CD4-positive, alpha-beta T cell (primary cell): ENCODE measurements at regions of chr10 and their contacts with region 1.

Region 1: DNA sequence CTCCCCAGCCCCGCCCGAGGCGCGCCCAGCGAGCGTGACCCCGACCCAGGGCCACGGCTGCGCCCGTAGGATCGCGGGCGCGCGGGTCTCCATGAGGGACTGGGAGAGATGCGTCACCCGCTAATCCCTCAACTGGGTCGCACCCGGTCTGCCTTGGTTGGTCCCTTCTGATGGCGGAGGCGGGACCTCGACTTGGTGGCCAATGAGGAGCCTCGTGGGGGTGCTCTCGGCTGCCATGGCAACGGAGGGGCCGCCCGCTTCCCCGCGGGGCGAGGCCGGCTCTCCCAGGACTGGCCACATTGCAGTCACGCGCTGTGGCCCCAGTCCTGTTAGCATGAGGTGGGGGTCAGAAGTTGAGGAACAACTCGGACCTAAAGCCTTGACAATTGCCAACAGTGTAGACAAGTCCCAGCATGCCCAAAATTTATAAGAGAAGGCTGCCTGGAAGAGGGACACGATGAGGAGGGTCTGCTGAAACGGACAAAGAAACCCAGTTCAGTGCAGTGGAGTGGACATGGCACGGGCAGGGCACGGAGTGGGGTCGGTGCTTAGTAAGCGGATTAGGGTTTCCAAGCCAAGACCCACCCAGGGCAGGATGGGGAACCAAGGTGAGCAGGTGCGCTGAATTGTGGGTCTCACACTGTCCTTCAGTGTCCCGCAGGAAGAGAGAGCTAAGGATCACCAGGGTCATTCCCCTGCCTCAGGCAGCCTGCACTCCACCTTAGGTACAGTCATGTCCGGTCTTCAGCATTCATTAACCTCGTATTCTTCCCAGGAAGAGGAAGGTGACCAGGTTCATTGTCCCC is 24.4 kb downstream of the DDIT4 start:
- DNase-seq: peak; percentile 68 to 97 (median 83)
- ATAC-seq: peak; percentile 57
- H3K4me3 ChIP-seq: peak overlapping the region; percentile 75
- H3K4me3 Mint-ChIP-seq: peak overlapping the region; percentile 82
- H3K27ac ChIP-seq: peak overlapping the region; percentile 89 to 98
- H3K27ac Mint-ChIP-seq: peak overlapping the region; percentile 96
- H3K4me1 ChIP-seq: peaks cover 56% of the 10 kb centered on the region
- H3K4me1 Mint-ChIP-seq: peaks cover 63% of the 10 kb centered on the region
- H3K27me3 ChIP-seq: no peaks in the 10 kb centered on the region
- H3K27me3 Mint-ChIP-seq: no peaks in the 10 kb centered on the region
- CTCF ChIP-seq: no peak

Region 2: GRCh38 chr10:72248468-72249151 is 49.6 kb before region 1 on chr10:
- CTCF ChIA-PET with region 1: no interaction called
- POLR2A ChIA-PET with region 1: interaction called, 31 read pairs
- intact Hi-C with region 1: loop called in 1 of 2 experiments (anchors 1 kb)
- DNase-seq: peak; percentile 54 to 96 (median 64)
- ATAC-seq: peak; percentile 87
- H3K4me3 ChIP-seq: peak overlapping the region; percentile 31
- H3K4me3 Mint-ChIP-seq: peak overlapping the region; percentile 85
- H3K27ac ChIP-seq: peak overlapping the region; percentile 20 to 62
- H3K27ac Mint-ChIP-seq: peak overlapping the region; percentile 96
- H3K4me1 ChIP-seq: peaks cover 99% of the 10 kb centered on the region
- H3K4me1 Mint-ChIP-seq: peaks cover 86% of the 10 kb centered on the region
- H3K27me3 ChIP-seq: no peaks in the 10 kb centered on the region
- H3K27me3 Mint-ChIP-seq: no peaks in the 10 kb centered on the region
- CTCF ChIP-seq: no peak

Region 3: GRCh38 chr10:72254813-72255568 is 43.2 kb before region 1 on chr10:
- CTCF ChIA-PET with region 1: no interaction called
- POLR2A ChIA-PET with region 1: interaction called, 10 read pairs
- intact Hi-C with region 1: loop called in 1 of 2 experiments (anchors 5 kb)
- DNase-seq: peak in 7 of 14 experiments; percentile 32 to 71 (median 58)
- ATAC-seq: peak; percentile 73
- H3K4me3 ChIP-seq: peak overlapping the region; percentile 13
- H3K4me3 Mint-ChIP-seq: peak overlapping the region; percentile 79
- H3K27ac ChIP-seq: peak overlapping the region in 1 of 2 donors; percentile 35
- H3K27ac Mint-ChIP-seq: peak overlapping the region; percentile 96
- H3K4me1 ChIP-seq: peaks cover 90% of the 10 kb centered on the region
- H3K4me1 Mint-ChIP-seq: peaks cover 78% of the 10 kb centered on the region
- H3K27me3 ChIP-seq: no peaks in the 10 kb centered on the region
- H3K27me3 Mint-ChIP-seq: no peaks in the 10 kb centered on the region
- CTCF ChIP-seq: no peak

Region 4: GRCh38 chr10:72260588-72261322 is 37.4 kb before region 1 on chr10:
- CTCF ChIA-PET with region 1: no interaction called
- POLR2A ChIA-PET with region 1: interaction called, 10 read pairs
- intact Hi-C with region 1: loop called in 1 of 2 experiments (anchors 5 kb)
- DNase-seq: peak; percentile 64 to 91 (median 77)
- ATAC-seq: peak; percentile 76
- H3K4me3 ChIP-seq: peak overlapping the region; percentile 77
- H3K4me3 Mint-ChIP-seq: peak overlapping the region; percentile 84
- H3K27ac ChIP-seq: peak overlapping the region; percentile 68 to 80
- H3K27ac Mint-ChIP-seq: peak overlapping the region; percentile 85
- H3K4me1 ChIP-seq: peaks cover 80% of the 10 kb centered on the region
- H3K4me1 Mint-ChIP-seq: peaks cover 72% of the 10 kb centered on the region
- H3K27me3 ChIP-seq: no peaks in the 10 kb centered on the region
- H3K27me3 Mint-ChIP-seq: no peaks in the 10 kb centered on the region
- CTCF ChIP-seq: no peak

Region 5: GRCh38 chr10:72285972-72286521 is 12.1 kb before region 1 on chr10:
- CTCF ChIA-PET with region 1: no interaction called
- POLR2A ChIA-PET with region 1: interaction called, 22 read pairs
- intact Hi-C with region 1: loop called in 1 of 2 experiments (anchors 1 kb)
- DNase-seq: peak in 1 of 14 experiments; percentile 23
- ATAC-seq: no peak
- H3K4me3 ChIP-seq: no peak overlapping the region
- H3K4me3 Mint-ChIP-seq: no peak overlapping the region
- H3K27ac ChIP-seq: no peak overlapping the region
- H3K27ac Mint-ChIP-seq: peak overlapping the region; percentile 71
- H3K4me1 ChIP-seq: peaks cover 33% of the 10 kb centered on the region
- H3K4me1 Mint-ChIP-seq: peaks cover 48% of the 10 kb centered on the region
- H3K27me3 ChIP-seq: no peaks in the 10 kb centered on the region
- H3K27me3 Mint-ChIP-seq: no peaks in the 10 kb centered on the region
- CTCF ChIP-seq: no peak

Region 6: DNA sequence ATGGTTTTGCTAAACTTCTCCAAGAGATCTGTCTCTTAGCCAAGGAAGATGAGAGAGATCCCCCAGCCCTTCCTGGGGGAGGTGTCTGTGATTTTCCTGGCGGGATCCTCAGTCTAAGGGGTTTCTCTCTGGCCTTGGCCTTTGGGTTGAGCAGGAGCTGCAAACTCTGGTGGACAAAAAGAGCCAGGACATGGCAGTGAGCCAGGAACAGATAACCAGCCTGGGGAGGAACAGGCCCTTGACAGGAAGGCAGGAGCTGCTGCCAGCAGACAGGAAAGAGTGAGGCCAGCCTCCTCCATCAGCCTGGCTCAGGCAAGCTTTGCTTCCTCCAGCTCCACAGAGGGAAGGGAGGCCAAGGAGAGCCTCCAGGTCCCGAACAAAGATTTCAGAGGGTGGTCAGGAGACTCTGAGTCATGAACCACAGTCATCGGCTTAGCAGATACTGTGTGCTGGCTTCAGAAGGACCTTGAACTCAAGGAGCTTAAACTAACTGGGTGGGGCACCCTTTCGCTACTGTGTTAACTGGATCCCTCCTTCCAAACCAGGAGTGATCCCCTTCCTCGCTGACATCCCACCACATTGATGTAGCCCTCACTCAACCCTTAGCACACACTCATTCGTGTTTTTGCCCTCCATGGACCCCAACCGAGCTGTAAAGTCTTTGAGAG is 10.3 kb after region 1 on chr10:
- CTCF ChIA-PET with region 1: interaction called, 4 read pairs
- POLR2A ChIA-PET with region 1: interaction called, 21 read pairs
- intact Hi-C with region 1: no loop called
- DNase-seq: peak in 4 of 14 experiments; percentile 39 to 70 (median 56)
- ATAC-seq: no peak
- H3K4me3 ChIP-seq: no peak overlapping the region
- H3K4me3 Mint-ChIP-seq: no peak overlapping the region
- H3K27ac ChIP-seq: no peak overlapping the region
- H3K27ac Mint-ChIP-seq: peak overlapping the region; percentile 69
- H3K4me1 ChIP-seq: peaks cover 64% of the 10 kb centered on the region
- H3K4me1 Mint-ChIP-seq: peaks cover 67% of the 10 kb centered on the region
- H3K27me3 ChIP-seq: no peaks in the 10 kb centered on the region
- H3K27me3 Mint-ChIP-seq: no peaks in the 10 kb centered on the region
- CTCF ChIP-seq: no peak

Region 7: GRCh38 chr10:72319416-72320254 is 21.5 kb after region 1 on chr10:
- CTCF ChIA-PET with region 1: interaction called, 4 read pairs
- POLR2A ChIA-PET with region 1: interaction called, 75 read pairs
- intact Hi-C with region 1: loop called (anchors 1 kb)
- DNase-seq: peak; percentile 77 to 95 (median 88)
- ATAC-seq: peak; percentile 65
- H3K4me3 ChIP-seq: peak overlapping the region; percentile 52
- H3K4me3 Mint-ChIP-seq: peak overlapping the region; percentile 57
- H3K27ac ChIP-seq: peak overlapping the region; percentile 86 to 95
- H3K27ac Mint-ChIP-seq: peak overlapping the region; percentile 91
- H3K4me1 ChIP-seq: peaks cover 93% of the 10 kb centered on the region
- H3K4me1 Mint-ChIP-seq: peaks cover 89% of the 10 kb centered on the region
- H3K27me3 ChIP-seq: no peaks in the 10 kb centered on the region
- H3K27me3 Mint-ChIP-seq: no peaks in the 10 kb centered on the region
- CTCF ChIP-seq: no peak

Region 8: DNA sequence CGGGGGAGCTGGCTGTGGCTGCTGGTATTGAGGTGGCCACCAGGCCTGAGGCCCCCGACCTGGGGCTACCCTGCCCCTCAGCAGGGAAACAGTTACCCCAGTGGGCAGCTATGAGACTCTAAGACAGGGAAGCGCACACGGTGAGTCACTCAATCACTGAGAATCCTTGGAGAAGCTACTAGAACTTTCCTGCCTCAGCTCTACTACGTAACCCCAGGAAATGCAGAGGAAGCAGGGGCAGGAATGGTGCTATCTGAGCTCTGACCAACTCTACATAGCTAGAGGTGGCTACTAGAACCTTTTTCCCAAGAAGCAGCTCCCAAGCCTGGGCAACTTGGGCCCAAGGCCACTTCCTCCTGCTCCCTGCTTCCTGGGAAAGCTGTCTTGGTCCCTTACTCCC is 44.7 kb after region 1 on chr10:
- CTCF ChIA-PET with region 1: no interaction called
- POLR2A ChIA-PET with region 1: no interaction called
- intact Hi-C with region 1: no loop called
- DNase-seq: no peak
- ATAC-seq: no peak
- H3K4me3 ChIP-seq: no peak overlapping the region
- H3K4me3 Mint-ChIP-seq: no peak overlapping the region
- H3K27ac ChIP-seq: no peak overlapping the region
- H3K27ac Mint-ChIP-seq: no peak overlapping the region
- H3K4me1 ChIP-seq: peaks cover 20% of the 10 kb centered on the region
- H3K4me1 Mint-ChIP-seq: peaks cover 7% of the 10 kb centered on the region
- H3K27me3 ChIP-seq: no peaks in the 10 kb centered on the region
- H3K27me3 Mint-ChIP-seq: no peaks in the 10 kb centered on the region
- CTCF ChIP-seq: no peak